ENCODE measurements at regions of chr9 and their contacts with region 1.

Region 1: GRCh38 chr9:133184962-133185361 is 21.2 kb upstream of the GBGT1 start:
- DNase-seq: peak; percentile 58
- ATAC-seq: no peak
- H3K4me3 ChIP-seq: no peak overlapping the region
- H3K4me3 Mint-ChIP-seq: no peak overlapping the region
- H3K27ac ChIP-seq: no peak overlapping the region
- H3K27ac Mint-ChIP-seq: no peak overlapping the region
- H3K4me1 ChIP-seq: peaks cover 8 to 12% of the 10 kb centered on the region in 2 donors
- H3K4me1 Mint-ChIP-seq: peaks cover 8% of the 10 kb centered on the region
- H3K27me3 ChIP-seq: peaks cover 0 to 18% (median 4%) of the 10 kb centered on the region in 4 experiments
- H3K27me3 Mint-ChIP-seq: peaks cover 30% of the 10 kb centered on the region
- CTCF ChIP-seq: peak; percentile 43

Region 2: DNA sequence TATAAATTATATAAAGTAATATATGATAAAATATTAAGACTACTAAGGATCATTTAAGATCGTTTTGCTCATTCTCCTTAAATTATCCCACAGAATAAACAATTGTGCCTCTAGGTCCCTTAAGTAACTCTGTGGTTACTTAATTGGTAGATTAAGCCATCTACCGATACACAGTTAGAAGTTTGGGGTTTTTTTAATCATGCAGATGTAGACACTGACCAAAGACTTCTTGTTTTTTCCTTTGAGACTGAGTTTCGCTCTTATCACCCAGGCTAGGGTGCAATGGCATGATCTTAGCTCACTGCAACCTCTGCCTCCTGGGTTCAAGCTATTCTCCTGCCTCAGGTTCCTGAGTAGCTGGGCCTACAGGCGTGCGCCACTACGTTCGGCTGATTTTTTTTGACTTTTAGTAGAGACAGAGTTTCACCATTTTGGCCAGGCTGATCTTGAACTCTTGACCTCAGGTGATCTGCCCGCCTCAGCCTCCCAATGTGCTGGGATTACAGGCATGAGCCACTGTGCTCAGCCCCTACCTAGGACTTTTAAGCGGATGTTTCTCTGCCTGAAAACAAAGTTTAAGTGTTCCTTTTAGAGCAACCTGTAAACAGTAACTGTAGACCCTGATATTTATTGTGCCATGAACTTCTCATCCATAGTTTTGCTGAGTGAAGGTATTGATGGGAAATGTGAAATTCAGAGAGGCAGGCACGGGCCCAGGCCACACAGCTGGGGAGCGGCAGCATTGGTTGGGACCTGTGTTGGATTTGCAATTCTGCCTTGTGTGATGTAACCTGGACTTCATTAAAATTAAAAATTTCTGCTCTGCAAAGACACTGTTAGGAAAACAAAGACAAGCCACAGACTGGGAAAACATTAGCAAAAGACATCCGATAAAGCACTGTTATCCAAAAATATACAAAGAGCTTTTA is 111.6 kb before region 1 on chr9:
- CTCF ChIA-PET with region 1: no interaction called
- POLR2A ChIA-PET with region 1: no interaction called
- intact Hi-C with region 1: no loop called
- DNase-seq: no peak
- ATAC-seq: no peak
- H3K4me3 ChIP-seq: no peak overlapping the region
- H3K4me3 Mint-ChIP-seq: no peak overlapping the region
- H3K27ac ChIP-seq: no peak overlapping the region
- H3K27ac Mint-ChIP-seq: no peak overlapping the region
- H3K4me1 ChIP-seq: no peaks in the 10 kb centered on the region
- H3K4me1 Mint-ChIP-seq: no peaks in the 10 kb centered on the region
- H3K27me3 ChIP-seq: peaks cover 0 to 3% (median 0%) of the 10 kb centered on the region in 4 experiments
- H3K27me3 Mint-ChIP-seq: no peaks in the 10 kb centered on the region
- CTCF ChIP-seq: no peak

Region 3: GRCh38 chr9:133103183-133103986 is 81.6 kb before region 1 on chr9:
- CTCF ChIA-PET with region 1: interaction called, 9 read pairs
- POLR2A ChIA-PET with region 1: no interaction called
- intact Hi-C with region 1: loop called (anchors 1 kb)
- DNase-seq: peak; percentile 74
- ATAC-seq: peak; percentile 89
- H3K4me3 ChIP-seq: no peak overlapping the region
- H3K4me3 Mint-ChIP-seq: no peak overlapping the region
- H3K27ac ChIP-seq: no peak overlapping the region
- H3K27ac Mint-ChIP-seq: peak overlapping the region; percentile 21
- H3K4me1 ChIP-seq: no peaks in the 10 kb centered on the region
- H3K4me1 Mint-ChIP-seq: no peaks in the 10 kb centered on the region
- H3K27me3 ChIP-seq: no peaks in the 10 kb centered on the region
- H3K27me3 Mint-ChIP-seq: no peaks in the 10 kb centered on the region
- CTCF ChIP-seq: peak; percentile 97

Region 4: GRCh38 chr9:133125941-133126702 is 58.8 kb before region 1 on chr9:
- CTCF ChIA-PET with region 1: no interaction called
- POLR2A ChIA-PET with region 1: no interaction called
- intact Hi-C with region 1: no loop called
- DNase-seq: peak; percentile 51
- ATAC-seq: peak; percentile 8
- H3K4me3 ChIP-seq: peak overlapping the region in 4 of 5 experiments; percentile 19 to 52 (median 32)
- H3K4me3 Mint-ChIP-seq: peak overlapping the region; percentile 82
- H3K27ac ChIP-seq: peak overlapping the region; percentile 55 to 62
- H3K27ac Mint-ChIP-seq: peak overlapping the region; percentile 95
- H3K4me1 ChIP-seq: peaks cover 30 to 47% of the 10 kb centered on the region in 2 donors
- H3K4me1 Mint-ChIP-seq: peaks cover 64% of the 10 kb centered on the region
- H3K27me3 ChIP-seq: no peaks in the 10 kb centered on the region
- H3K27me3 Mint-ChIP-seq: no peaks in the 10 kb centered on the region
- CTCF ChIP-seq: no peak

Region 5: GRCh38 chr9:133356391-133357091 is 171.6 kb after region 1 on chr9 and contains the starts of genes SURF1 and SURF2:
- CTCF ChIA-PET with region 1: interaction called, 3 read pairs
- POLR2A ChIA-PET with region 1: no interaction called
- intact Hi-C with region 1: loop called (anchors 10 kb)
- DNase-seq: peak; percentile 88
- ATAC-seq: peak; percentile 88
- H3K4me3 ChIP-seq: peak within 1 kb of the TSS; percentile 39 to 91 (median 75)
- H3K4me3 Mint-ChIP-seq: peak within 1 kb of the TSS; percentile 89
- H3K27ac ChIP-seq: peak within 1 kb of the TSS; percentile 55 to 90
- H3K27ac Mint-ChIP-seq: peak within 1 kb of the TSS; percentile 83
- H3K4me1 ChIP-seq: peaks cover 16 to 29% of the 10 kb centered on the region in 2 donors
- H3K4me1 Mint-ChIP-seq: peaks cover 32% of the 10 kb centered on the region
- H3K27me3 ChIP-seq: no peaks in the 10 kb centered on the region
- H3K27me3 Mint-ChIP-seq: no peaks in the 10 kb centered on the region
- CTCF ChIP-seq: peak; percentile 33
- total RNA-seq, gene SURF1: 44.1 and 56.2 TPM in 2 replicates
- total RNA-seq, gene SURF2: 16.9 and 17.1 TPM in 2 replicates

Region 6: GRCh38 chr9:133478851-133479711 is 294.1 kb after region 1 on chr9 and contains the start of gene SLC2A6:
- CTCF ChIA-PET with region 1: interaction called, 144 read pairs
- POLR2A ChIA-PET with region 1: no interaction called
- intact Hi-C with region 1: no loop called
- DNase-seq: peak; percentile 87
- ATAC-seq: peak; percentile 92
- H3K4me3 ChIP-seq: peak within 1 kb of the TSS; percentile 22 to 83 (median 79)
- H3K4me3 Mint-ChIP-seq: peak within 1 kb of the TSS; percentile 89
- H3K27ac ChIP-seq: peak within 1 kb of the TSS; percentile 71 to 78
- H3K27ac Mint-ChIP-seq: peak within 1 kb of the TSS; percentile 90
- H3K4me1 ChIP-seq: peaks cover 28 to 53% of the 10 kb centered on the region in 2 donors
- H3K4me1 Mint-ChIP-seq: peaks cover 31% of the 10 kb centered on the region
- H3K27me3 ChIP-seq: no peaks in the 10 kb centered on the region
- H3K27me3 Mint-ChIP-seq: peaks cover 3% of the 10 kb centered on the region
- CTCF ChIP-seq: no peak
- total RNA-seq, gene SLC2A6: 47.0 and 51.8 TPM in 2 replicates

Region 7: DNA sequence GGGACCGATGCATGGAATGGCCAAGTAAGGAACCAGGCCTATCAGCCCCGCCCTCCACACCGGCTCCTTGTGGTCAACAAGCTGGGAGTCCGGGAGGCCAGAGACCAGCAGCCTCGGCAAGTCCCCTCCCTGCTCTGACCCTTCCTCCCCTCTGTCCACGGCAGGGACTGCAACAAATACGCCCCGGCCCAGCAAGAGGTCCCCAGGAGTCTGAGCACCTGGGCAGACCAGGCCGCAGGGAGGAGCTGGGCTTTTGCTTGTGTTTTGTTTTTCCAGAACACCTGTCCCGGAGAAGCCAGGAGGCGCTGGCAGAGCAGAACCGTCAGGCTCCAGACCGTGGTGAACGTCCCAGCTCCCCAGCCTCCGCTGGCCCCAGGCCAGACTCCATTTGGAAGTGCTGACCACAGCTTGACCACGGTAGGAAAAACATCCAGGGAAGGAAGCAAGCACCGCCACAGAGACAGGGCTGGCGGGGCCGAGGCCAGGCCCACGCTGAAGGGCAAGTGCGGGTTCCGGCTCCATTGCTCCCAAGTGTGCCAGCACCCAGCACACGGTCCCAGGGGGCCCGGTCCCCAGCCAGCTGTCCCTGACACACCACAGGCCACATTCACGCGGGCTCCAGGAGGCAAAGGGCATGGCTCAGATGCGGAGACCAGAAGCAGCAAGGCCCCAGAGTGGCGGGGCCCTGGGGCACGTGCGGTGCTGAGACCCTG is 750.5 kb after region 1 on chr9:
- CTCF ChIA-PET with region 1: no interaction called
- POLR2A ChIA-PET with region 1: interaction called, 10 read pairs
- intact Hi-C with region 1: no loop called
- DNase-seq: no peak
- ATAC-seq: no peak
- H3K4me3 ChIP-seq: no peak overlapping the region
- H3K4me3 Mint-ChIP-seq: no peak overlapping the region
- H3K27ac ChIP-seq: no peak overlapping the region
- H3K27ac Mint-ChIP-seq: no peak overlapping the region
- H3K4me1 ChIP-seq: peaks cover 8 to 10% of the 10 kb centered on the region in 2 donors
- H3K4me1 Mint-ChIP-seq: peaks cover 32% of the 10 kb centered on the region
- H3K27me3 ChIP-seq: no peaks in the 10 kb centered on the region
- H3K27me3 Mint-ChIP-seq: no peaks in the 10 kb centered on the region
- CTCF ChIP-seq: no peak